Ascending aorta (tissue), 2 donors: ENCODE measurements at regions of chr2 and their contacts with region 1.

Region 1: GRCh38 chr2:20051532-20052228 is at the start of gene LAPTM4A:
- DNase-seq: peak; percentile 97 to 100
- H3K4me3 ChIP-seq: peak within 1 kb of the TSS; percentile 73 to 81
- H3K27ac ChIP-seq: peak within 1 kb of the TSS; percentile 96
- H3K4me1 ChIP-seq: peaks cover 0 to 21% of the 10 kb centered on the region in 2 donors
- H3K27me3 ChIP-seq: no peaks in the 10 kb centered on the region
- CTCF ChIP-seq: no peak
- total RNA-seq, gene LAPTM4A: 95.6 TPM

Region 2: DNA sequence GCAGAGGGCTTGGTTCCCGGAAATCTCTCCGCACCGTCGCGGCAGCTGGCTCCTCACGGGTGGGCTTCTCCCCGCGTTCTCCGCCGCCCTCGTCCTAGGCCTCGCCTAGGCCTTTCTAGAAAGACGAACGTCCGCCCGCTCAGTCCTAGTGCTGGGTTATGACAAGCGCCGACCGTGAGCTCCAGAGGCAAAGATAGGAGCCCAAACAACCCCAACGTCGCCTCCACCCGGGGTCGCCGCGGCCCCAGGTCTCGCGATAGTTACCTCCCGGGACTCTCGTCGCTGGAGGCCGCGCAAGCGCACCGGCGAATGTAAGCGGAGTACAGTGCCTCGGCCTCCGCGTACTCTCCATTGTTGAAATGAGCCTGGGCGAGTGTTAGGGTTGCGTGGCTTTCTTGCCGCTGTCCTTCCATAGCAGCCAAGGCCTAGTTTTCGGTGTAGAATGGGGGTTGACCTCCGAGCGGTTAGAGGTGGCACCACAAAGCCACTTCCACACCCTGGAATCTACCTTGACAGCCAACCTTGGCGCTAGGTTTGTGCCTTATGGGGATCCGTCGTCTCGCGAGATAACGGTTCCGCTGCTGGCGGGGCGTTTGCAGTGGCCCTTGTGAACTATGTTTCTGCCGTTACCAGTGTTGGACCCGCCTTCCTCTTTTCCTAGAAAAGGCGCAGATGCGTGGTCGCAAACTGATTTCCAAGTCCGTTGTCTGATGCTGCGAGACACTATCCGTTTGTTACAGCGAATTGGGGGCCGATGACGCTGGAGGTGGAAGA is 150.1 kb before region 1 on chr2 and contains the start of gene TTC32:
- intact Hi-C with region 1: loop called (anchors 5 kb)
- DNase-seq: peak; percentile 70 to 96
- H3K4me3 ChIP-seq: peak within 1 kb of the TSS; percentile 79 to 91
- H3K27ac ChIP-seq: peak within 1 kb of the TSS; percentile 84 to 91
- H3K4me1 ChIP-seq: peaks cover 0 to 28% of the 10 kb centered on the region in 2 donors
- H3K27me3 ChIP-seq: no peaks in the 10 kb centered on the region
- CTCF ChIP-seq: no peak
- total RNA-seq, gene TTC32: not detected

Region 3: DNA sequence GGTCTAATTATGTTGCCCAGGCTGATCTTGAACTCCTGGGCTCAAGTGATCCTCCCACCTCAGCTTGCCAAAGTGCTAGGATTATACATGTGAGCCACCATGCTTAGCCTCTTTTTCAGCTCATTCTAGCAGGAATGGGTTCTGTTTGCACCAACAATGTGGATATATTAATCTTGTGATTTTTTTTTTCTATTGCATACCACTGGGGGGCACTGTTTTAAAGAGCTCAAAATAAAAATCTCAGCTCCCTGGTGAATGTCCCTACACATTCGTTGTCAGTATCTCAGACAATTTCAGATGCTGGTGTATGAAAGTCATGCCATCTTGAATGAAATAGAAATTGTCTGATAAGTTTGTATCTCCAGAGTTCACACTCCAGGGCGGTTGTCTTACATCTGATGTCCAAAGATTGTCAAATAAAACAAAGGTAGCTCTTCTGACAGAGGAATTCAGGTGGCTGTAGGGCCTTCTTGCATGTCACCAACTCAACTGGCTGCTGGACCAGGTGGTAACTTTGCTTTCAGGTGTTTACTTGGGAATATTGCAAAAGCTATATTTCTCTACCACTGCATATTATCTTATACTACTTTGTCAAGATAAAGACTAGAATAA is 36.1 kb before region 1 on chr2:
- intact Hi-C with region 1: loop called (anchors 2 kb)
- DNase-seq: no peak
- H3K4me3 ChIP-seq: no peak overlapping the region
- H3K27ac ChIP-seq: no peak overlapping the region
- H3K4me1 ChIP-seq: peaks cover 3 to 6% of the 10 kb centered on the region in 2 donors
- H3K27me3 ChIP-seq: no peaks in the 10 kb centered on the region
- CTCF ChIP-seq: peak; percentile 49 to 62 (median 62)

Region 4: GRCh38 chr2:20062615-20063545 is 11.2 kb after region 1 on chr2:
- intact Hi-C with region 1: loop called (anchors 1 kb)
- DNase-seq: peak; percentile 33 to 90
- H3K4me3 ChIP-seq: no peak overlapping the region
- H3K27ac ChIP-seq: peak overlapping the region; percentile 71 to 85
- H3K4me1 ChIP-seq: peaks cover 0 to 2% of the 10 kb centered on the region in 2 donors
- H3K27me3 ChIP-seq: no peaks in the 10 kb centered on the region
- CTCF ChIP-seq: peak in 1 of 3 experiments; percentile 7

Region 5: DNA sequence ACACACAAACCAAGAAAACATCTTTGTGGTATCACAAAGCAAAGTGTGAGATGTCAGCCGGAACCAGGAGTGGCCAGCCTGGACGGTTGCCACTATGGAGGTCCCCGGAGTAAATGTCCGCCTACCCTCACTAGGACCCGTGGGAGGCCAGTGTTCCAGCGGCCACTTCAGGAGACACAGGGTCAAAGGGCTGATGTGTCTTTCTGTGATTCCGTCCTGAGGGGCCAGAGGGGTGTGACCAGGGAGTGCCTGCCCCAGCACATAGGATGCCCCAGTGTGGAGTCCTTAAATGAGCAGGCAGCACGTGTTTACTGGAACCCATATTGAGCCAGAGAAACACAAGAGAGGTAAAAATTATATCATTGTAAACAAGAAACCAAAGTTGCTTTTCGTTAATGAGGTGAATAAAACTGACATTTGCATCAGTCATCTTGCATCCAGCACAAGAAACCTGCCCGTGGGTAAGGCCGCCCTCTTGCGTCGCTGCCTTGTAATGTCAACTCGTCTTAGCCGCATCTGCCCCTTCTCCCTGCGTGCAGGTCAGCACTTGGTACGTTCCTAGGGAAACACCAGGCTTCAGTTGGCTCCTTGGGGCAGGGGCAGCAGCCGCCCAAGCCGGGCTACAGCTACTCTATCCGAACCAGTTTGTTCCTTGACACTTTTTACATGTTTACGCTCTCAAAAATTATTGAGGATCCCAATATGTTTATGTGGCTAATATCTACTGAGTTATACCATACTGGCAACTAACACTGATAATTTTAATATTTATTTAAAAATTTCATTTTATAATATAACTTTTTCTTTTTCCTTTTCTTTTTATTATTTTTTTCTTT is 46.4 kb after region 1 on chr2:
- intact Hi-C with region 1: loop called (anchors 5 kb)
- DNase-seq: peak in 1 of 2 donors; percentile 90
- H3K4me3 ChIP-seq: no peak overlapping the region
- H3K27ac ChIP-seq: no peak overlapping the region
- H3K4me1 ChIP-seq: no peaks in the 10 kb centered on the region
- H3K27me3 ChIP-seq: no peaks in the 10 kb centered on the region
- CTCF ChIP-seq: peak; percentile 87 to 94 (median 87)

Region 6: DNA sequence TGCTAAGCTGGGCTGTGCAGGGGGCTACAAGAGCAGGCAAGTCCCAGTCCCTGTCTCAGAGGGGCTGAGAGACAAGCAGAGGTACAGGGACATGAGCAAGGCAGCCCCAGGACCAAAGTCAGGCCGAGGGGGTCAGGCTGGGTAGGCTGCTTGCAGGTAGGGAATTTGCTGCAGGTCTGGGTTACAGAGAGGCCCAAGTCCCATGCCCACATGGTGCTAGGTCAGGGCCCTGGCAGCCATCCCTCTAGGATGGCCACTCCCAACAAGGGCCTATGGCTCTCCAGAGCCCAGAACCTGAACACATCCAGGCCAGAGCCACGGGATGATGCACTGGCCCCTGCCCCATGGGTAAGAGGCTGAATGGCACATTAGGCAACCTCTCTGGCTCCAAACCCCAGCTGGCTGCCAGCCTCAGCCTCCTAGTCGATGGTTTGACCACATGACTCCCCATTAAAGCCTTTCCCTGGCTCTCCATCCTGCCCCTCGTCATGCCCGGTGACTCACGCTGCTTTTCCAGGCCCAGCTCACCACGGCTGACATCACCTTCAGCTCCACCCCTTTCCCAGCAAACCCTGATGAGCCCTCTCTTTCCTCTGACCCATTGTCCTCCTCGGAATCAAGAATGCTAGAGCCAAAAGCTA is 89.6 kb after region 1 on chr2:
- intact Hi-C with region 1: loop called (anchors 5 kb)
- DNase-seq: peak; percentile 85 to 92
- H3K4me3 ChIP-seq: no peak overlapping the region
- H3K27ac ChIP-seq: peak overlapping the region; percentile 69 to 76
- H3K4me1 ChIP-seq: peaks cover 3 to 5% of the 10 kb centered on the region in 2 donors
- H3K27me3 ChIP-seq: no peaks in the 10 kb centered on the region
- CTCF ChIP-seq: no peak

Region 7: DNA sequence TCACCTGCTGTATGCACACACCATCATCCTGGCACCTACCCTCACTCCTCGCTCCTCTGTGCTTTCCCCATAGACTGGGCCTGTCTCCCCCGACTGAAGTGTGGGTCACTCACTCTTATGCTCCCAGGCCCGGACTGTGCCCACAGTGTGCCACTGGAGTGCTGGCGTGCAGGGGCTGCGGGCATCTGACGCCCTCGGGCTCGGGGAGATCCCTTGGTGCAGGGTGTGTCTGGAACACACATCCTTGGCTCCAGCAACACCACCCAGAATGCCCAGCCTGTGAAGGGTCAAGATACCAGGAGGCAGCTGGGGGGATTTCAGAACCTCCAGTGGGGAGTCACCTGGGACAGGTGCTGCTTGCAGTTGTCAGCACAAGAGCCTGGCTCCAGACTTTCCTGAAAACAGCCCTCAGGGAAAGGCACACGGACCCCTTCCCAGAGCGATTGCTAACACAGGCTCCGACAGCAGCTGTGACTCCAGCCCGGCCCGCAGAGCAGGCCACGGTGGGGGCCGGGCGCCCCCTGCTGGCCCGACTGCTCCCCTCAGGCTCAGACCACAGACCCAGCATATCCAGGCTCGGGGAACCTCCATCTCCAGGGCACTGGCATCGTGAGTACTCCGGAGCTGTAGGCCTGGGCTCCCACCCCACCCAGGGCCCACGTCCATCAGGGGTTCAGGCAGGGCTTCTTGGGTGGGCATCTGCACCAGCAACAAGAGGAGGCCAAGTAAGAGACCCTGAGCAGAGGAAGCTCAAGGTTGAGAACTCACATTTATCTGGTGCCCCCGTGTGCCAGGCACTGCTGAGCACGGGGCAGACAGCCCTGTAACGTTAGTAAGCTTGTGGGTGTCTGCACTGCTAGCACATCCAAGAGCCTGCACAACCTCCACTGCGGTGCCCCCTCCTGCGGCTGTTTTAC is 590.6 kb after region 1 on chr2:
- intact Hi-C with region 1: loop called (anchors 10 kb)
- DNase-seq: peak in 1 of 2 donors; percentile 93
- H3K4me3 ChIP-seq: peak overlapping the region in 1 of 2 donors; percentile 37
- H3K27ac ChIP-seq: peak overlapping the region; percentile 95 to 99
- H3K4me1 ChIP-seq: peaks cover 21 to 49% of the 10 kb centered on the region in 2 donors
- H3K27me3 ChIP-seq: no peaks in the 10 kb centered on the region
- CTCF ChIP-seq: peak; percentile 95 to 99 (median 96)